Posterior vena cava (tissue), 2 donors: ENCODE measurements at regions of chr21 and their contacts with region 1.

Region 1: GRCh38 chr21:42117229-42117966 is 46.3 kb downstream of the UMODL1 start:
- DNase-seq: no peak

Region 2: DNA sequence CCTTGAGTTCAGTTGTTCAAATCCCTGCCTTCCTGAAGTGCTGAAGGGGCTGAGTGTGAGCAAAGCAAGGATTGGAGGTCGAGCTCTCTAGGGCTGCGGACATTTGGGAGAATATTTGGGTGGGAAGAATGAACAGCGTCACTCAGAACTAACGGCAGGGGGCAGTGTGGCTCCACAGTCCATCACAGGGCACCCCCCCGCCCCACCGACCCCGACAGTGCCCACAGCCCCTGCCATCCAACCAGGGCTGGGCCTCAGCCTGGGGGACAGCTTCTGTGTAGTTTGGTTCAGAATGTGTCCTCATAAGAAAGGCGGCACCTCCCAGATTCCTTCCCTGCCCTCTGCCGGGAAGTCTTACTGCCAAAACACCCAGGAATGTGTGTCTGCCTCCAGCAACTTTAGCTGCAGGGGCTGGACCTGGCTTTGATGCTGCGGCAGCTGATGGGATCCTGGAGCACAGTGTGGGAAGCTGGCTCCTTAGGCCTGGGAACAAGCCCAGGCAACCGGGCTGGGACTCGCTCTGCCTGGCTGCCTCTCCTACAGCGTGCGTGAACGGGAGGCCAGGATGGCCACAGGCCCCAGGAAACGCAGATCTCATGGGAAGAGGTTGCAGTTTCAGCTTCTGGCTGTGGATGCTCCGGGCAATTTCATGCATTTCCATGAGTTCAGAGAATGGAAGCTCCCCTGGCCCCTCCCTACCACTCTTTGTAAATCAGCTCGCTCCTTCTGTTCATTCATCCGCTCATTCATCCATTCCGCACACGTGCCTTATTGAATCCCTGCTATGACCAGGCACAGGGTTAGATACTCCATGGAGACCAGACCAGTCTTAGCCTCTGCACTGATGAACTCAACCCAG is 504.5 kb before region 1 on chr21:
- intact Hi-C with region 1: loop called in 1 of 2 experiments (anchors 10 kb)
- DNase-seq: peak; percentile 95

Region 3: DNA sequence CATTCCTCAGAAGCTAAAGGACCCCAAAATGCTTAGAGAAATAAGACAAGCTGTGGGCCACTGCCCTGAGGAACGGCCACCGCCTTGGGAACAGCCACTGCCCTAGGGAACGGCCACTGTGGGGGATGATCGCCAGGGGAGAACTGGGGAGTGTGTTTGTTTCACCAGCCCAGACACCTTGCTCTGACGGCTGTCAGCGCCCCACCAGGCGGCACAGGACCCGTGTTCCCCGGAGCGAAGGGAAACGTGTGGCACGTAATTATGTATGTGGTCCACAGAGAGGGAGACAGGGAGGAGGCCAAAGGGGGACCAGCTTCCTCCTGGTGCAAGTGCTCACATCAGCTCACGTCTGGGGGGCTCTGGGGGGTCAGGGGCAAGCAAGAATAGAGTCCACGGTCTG is 304.7 kb before region 1 on chr21:
- intact Hi-C with region 1: loop called in 1 of 2 experiments (anchors 2 kb)
- DNase-seq: no peak

Region 4: DNA sequence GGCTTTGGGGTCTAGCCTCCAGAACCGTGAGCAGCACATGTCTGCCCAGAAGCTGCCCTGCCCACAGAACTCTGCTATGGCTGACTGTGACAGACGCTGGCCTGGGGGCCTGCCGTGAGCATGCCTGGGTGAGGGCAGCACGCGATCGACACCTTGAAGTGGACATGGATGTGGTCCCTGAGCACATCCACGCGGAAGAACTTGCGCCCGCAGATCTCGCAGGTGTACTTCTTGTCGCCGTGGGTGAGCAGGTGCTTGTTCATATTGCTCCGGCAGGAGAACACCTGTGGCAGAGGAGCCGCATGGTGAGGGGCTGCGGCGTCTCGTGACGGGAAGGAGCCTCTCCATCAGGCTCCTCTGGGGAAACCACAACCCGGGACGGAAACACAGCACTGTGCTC is 294.2 kb before region 1 on chr21:
- intact Hi-C with region 1: loop called in 1 of 2 experiments (anchors 5 kb)
- DNase-seq: no peak

Region 5: GRCh38 chr21:42097860-42098454 is 19.4 kb before region 1 on chr21:
- intact Hi-C with region 1: loop called in 1 of 2 experiments (anchors 1 kb)
- DNase-seq: peak; percentile 79

Region 6: DNA sequence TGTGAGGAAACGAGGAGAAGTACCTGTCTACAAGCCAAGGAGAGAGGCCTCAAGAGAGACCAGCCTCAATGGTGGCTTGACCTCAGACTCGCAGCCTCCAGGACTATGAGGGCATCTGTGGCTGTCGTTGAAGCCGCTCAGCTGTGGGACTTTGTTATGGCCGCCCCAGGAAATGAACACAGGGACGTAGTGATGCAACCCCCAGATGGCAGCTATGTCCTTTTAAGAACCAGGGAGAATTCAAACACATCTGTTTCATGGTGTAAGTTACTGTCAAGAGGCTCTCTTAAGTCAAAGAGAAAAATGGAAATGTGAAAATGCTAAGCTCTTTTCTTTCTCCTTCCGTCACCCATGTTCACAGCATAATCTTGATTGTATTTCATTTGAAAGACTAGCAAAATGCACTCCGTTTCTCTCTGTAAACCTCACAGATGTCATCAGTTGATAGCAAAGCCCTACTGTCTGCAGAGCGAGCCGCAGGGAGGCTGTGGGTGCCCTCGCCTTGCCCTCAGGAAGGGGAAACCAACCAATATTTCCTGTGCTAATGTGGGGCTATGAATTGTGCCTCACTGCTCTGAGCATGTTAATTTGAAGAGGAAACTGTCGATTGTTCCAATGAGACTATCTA is 307.6 kb after region 1 on chr21:
- intact Hi-C with region 1: no loop called
- DNase-seq: peak; percentile 67